AG04450 (cell line): ENCODE measurements at regions of chr4 and their contacts with region 1.

Region 1: GRCh38 chr4:183840311-183840710 is 64.8 kb upstream of the STOX2 start:
- DNase-seq: peak; percentile 36
- H3K4me3 ChIP-seq: no peak overlapping the region
- H3K27ac ChIP-seq: no peak overlapping the region
- H3K27me3 ChIP-seq: peaks cover 2% of the 10 kb centered on the region
- CTCF ChIP-seq: peak; percentile 90

Region 2: DNA sequence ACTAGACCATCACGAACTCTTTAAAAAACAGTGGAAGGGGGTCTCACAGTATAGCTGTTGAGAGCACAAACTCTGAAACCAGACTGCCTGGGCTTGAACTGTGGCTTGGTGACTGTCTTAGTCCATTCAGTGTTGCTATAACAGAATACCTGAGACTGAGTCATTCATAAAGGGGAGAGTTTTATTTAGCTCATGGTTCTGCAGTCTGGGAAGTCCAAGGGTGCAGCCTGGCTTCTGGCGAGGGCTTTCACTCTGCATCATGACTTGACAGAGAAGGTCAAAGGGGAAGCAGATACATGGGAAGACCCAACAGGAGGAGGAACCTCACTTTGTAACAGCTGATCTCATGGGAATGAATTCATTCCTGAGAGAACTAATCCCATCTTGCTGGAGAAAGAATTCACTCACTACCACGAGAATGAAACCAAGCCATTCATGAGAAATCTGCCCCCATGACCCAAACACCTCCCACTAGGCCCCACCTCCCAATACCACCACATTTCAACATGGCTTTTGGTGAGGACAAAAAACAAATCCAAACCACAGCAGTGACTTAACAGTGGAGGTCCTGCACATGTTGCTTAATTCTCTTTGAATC is 51.9 kb before region 1 on chr4:
- CTCF ChIA-PET with region 1: no interaction called
- POLR2A ChIA-PET with region 1: no interaction called
- DNase-seq: no peak
- H3K4me3 ChIP-seq: no peak overlapping the region
- H3K27ac ChIP-seq: no peak overlapping the region
- H3K27me3 ChIP-seq: no peaks in the 10 kb centered on the region
- CTCF ChIP-seq: no peak

Region 3: DNA sequence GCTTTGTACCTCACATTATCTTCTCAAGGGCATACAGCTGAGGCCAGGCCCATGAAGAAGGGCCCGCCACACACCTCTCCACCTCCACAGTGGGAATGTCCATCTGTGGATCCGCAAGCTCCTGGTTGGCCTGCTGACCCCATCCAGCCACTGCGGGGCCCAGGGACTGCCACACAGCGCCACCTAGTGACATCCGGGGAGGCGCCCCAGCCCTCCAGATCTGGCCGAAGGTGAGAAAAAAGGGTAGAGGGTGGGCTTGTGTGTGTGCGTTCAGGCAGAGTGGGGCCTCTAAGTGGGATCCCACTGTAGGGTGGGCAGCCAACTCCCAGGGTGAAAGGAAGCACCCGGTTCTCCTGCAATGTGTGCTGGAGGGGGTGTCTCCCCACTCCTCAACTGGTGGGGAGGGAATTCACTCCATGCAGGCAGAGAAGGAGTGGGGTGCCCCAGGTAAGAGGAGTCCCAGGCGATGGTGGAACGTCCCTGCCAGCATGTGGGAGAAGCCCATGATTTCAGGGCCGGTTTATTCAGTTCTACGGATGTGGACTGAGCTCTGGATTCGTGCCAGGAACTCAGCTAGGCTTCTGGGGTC is 260.1 kb after region 1 on chr4:
- CTCF ChIA-PET with region 1: interaction called, 29 read pairs
- POLR2A ChIA-PET with region 1: no interaction called
- DNase-seq: no peak
- H3K4me3 ChIP-seq: no peak overlapping the region
- H3K27ac ChIP-seq: no peak overlapping the region
- H3K27me3 ChIP-seq: no peaks in the 10 kb centered on the region
- CTCF ChIP-seq: peak; percentile 69

Region 4: GRCh38 chr4:184122631-184123408 is 282.5 kb after region 1 on chr4:
- CTCF ChIA-PET with region 1: no interaction called
- POLR2A ChIA-PET with region 1: no interaction called
- DNase-seq: no peak
- H3K4me3 ChIP-seq: no peak overlapping the region
- H3K27ac ChIP-seq: no peak overlapping the region
- H3K27me3 ChIP-seq: no peaks in the 10 kb centered on the region
- CTCF ChIP-seq: no peak

Region 5: DNA sequence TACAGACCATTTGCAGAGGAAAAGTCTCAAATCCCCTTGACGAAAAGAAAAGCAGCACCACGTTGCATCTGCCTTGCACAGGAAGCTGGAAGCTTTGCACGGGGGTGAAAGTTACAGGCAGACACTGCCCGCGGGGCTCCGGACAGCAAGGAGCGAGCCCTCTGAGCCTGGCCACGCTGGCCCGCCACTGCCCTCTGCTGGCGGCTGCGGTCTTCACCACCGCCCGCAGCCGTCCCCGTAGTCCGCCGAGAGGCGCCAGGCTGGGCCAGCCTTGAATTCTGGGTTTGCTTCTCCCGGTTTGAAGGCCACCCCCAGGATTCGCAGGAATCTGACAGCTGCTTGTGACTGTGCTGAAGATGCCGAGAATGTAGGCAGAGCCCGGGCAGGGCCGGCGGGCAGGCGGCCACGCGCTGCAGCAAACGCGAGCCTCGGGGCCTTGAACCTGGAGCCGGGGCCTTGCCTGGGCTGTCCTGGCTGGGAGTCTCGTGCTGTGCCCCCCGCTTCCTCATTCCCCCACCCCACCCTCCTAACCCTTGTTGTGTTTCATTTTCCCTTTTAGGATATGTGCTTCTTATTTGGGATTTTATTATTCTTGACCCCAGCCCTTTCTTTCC is 328.2 kb after region 1 on chr4:
- CTCF ChIA-PET with region 1: interaction called, 86 read pairs
- POLR2A ChIA-PET with region 1: no interaction called
- DNase-seq: peak; percentile 27
- H3K4me3 ChIP-seq: no peak overlapping the region
- H3K27ac ChIP-seq: no peak overlapping the region
- H3K27me3 ChIP-seq: peaks cover 2% of the 10 kb centered on the region
- CTCF ChIP-seq: peak; percentile 97